Activated B cell treated with CpG ODN at 0.5 μM for 24 hours (primary cell): ENCODE measurements at regions of chr9 and their contacts with region 1.

Region 1: GRCh38 chr9:5140151-5140550 is 45.3 kb downstream of the INSL6 start:
- DNase-seq: no peak
- ATAC-seq: no peak
- H3K4me3 Mint-ChIP-seq: no peak overlapping the region
- H3K27ac Mint-ChIP-seq: no peak overlapping the region
- H3K4me1 Mint-ChIP-seq: no peaks in the 10 kb centered on the region
- H3K27me3 Mint-ChIP-seq: no peaks in the 10 kb centered on the region
- CTCF ChIP-seq: no peak

Region 2: DNA sequence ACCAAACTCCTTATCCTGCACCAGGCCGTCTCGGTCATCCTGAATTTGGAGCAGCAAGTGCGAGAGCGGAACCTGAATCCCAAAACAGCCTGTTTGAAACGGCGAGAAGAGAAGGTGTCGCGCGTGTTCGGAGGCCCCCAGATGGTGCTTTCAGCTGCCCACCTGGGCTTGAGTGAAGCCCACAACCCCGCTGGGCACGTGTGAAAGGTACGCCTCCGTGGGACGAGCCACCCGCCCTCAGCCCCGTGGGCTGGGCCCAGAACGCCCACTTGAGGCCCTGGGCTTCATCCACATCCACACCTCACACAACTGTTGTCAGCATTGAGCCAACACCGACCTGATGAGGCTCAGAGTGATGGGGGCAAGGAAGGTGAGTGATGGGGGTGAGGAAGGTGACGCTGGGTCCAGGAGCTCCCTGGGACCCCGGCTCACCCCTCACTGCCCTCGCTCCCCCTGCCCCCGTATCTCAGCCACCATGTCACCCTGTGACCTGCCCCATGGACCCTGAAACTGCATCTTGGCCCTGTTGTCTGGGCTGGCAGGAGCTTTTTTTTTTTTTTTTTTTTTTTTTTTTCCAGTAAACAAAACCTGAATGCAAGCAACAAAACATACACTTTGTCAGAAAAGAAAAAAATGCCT is 27.4 kb before region 1 on chr9:
- CTCF ChIA-PET with region 1: no interaction called
- POLR2A ChIA-PET with region 1: interaction called, 10 read pairs
- intact Hi-C with region 1: no loop called
- DNase-seq: no peak
- ATAC-seq: no peak
- H3K4me3 Mint-ChIP-seq: no peak overlapping the region
- H3K27ac Mint-ChIP-seq: no peak overlapping the region
- H3K4me1 Mint-ChIP-seq: no peaks in the 10 kb centered on the region
- H3K27me3 Mint-ChIP-seq: no peaks in the 10 kb centered on the region
- CTCF ChIP-seq: no peak